Activated T-helper 2 cell treated with anti-CD3 and anti-CD28 coated beads, Interferon-gamma antibody, Interleukin-2, Interleukin-4, amounts not matched to agents 10 μg/mL and 5 μg/mL and 100 μg/mL, durations not matched to agents 14 hours and 24 hours and 36 hours (primary cell): ENCODE measurements at regions of chr2 and their contacts with region 1.

Region 1: GRCh38 chr2:120109186-120110061 is 96.5 kb downstream of the EPB41L5 start:
- DNase-seq: no peak
- H3K4me3 Mint-ChIP-seq: peak overlapping the region; percentile 57
- H3K27ac Mint-ChIP-seq: peak overlapping the region; percentile 38
- H3K4me1 Mint-ChIP-seq: peaks cover 25% of the 10 kb centered on the region
- H3K27me3 Mint-ChIP-seq: peaks cover 29% of the 10 kb centered on the region

Region 2: GRCh38 chr2:119753041-119753929 is 356.1 kb before region 1 on chr2:
- intact Hi-C with region 1: loop called (anchors 5 kb)
- DNase-seq: no peak
- H3K4me3 Mint-ChIP-seq: no peak overlapping the region
- H3K27ac Mint-ChIP-seq: no peak overlapping the region
- H3K4me1 Mint-ChIP-seq: peaks cover 13% of the 10 kb centered on the region
- H3K27me3 Mint-ChIP-seq: peaks cover 10% of the 10 kb centered on the region

Region 3: GRCh38 chr2:120312861-120313694 is 203.7 kb after region 1 on chr2:
- intact Hi-C with region 1: loop called (anchors 2 kb)
- DNase-seq: peak; percentile 69
- H3K4me3 Mint-ChIP-seq: peak overlapping the region; percentile 67
- H3K27ac Mint-ChIP-seq: peak overlapping the region; percentile 58
- H3K4me1 Mint-ChIP-seq: peaks cover 29% of the 10 kb centered on the region
- H3K27me3 Mint-ChIP-seq: no peaks in the 10 kb centered on the region

Region 4: DNA sequence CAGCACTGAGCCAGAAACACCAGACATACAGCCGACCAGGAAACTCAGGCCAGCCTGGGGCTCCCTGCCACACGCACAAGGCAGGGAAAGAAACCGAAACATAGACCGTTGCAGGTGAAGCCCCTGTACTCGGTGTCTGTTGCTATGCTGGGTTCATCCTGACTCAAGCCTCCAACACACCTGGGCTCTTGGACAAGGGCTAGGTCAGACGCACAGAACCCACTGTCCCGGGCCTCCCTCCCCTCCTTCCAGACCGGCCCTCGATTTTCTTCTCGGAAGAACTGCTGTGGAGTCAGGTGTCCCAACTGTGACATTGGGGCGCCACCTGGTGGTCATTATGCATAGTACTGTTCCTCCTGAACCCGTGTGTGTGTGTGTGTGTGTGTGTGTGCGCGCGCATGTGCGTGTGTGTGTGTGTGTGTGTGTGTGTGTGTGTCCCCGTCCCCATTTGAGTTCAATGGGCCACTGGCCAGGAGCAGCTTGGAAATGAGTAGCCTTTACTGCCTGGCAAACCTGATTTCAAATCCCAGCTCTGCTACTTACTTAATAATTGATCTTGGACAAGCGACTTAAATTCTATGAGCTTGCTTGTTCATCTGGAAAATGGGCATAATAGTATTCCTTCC is 570.8 kb after region 1 on chr2:
- intact Hi-C with region 1: loop called (anchors 5 kb)
- DNase-seq: peak; percentile 52
- H3K4me3 Mint-ChIP-seq: no peak overlapping the region
- H3K27ac Mint-ChIP-seq: no peak overlapping the region
- H3K4me1 Mint-ChIP-seq: no peaks in the 10 kb centered on the region
- H3K27me3 Mint-ChIP-seq: peaks cover 7% of the 10 kb centered on the region